IMR-90 (cell line): ENCODE measurements at regions of chr1 and their contacts with region 1.

Region 1: GRCh38 chr1:229227298-229227919 is 43.5 kb upstream of the RAB4A start:
- DNase-seq: peak; percentile 61
- ATAC-seq: peak; percentile 65
- H3K4me3 ChIP-seq: no peak overlapping the region
- H3K27ac ChIP-seq: no peak overlapping the region
- H3K4me1 ChIP-seq: peaks cover 5% of the 10 kb centered on the region; the same call in 1 of the 2 replicates
- H3K27me3 ChIP-seq: peaks cover 22% of the 10 kb centered on the region
- CTCF ChIP-seq: peak; percentile 87
- POLR2A ChIP-seq: no peak
- RAD21 ChIP-seq: peak; percentile 89

Region 2: DNA sequence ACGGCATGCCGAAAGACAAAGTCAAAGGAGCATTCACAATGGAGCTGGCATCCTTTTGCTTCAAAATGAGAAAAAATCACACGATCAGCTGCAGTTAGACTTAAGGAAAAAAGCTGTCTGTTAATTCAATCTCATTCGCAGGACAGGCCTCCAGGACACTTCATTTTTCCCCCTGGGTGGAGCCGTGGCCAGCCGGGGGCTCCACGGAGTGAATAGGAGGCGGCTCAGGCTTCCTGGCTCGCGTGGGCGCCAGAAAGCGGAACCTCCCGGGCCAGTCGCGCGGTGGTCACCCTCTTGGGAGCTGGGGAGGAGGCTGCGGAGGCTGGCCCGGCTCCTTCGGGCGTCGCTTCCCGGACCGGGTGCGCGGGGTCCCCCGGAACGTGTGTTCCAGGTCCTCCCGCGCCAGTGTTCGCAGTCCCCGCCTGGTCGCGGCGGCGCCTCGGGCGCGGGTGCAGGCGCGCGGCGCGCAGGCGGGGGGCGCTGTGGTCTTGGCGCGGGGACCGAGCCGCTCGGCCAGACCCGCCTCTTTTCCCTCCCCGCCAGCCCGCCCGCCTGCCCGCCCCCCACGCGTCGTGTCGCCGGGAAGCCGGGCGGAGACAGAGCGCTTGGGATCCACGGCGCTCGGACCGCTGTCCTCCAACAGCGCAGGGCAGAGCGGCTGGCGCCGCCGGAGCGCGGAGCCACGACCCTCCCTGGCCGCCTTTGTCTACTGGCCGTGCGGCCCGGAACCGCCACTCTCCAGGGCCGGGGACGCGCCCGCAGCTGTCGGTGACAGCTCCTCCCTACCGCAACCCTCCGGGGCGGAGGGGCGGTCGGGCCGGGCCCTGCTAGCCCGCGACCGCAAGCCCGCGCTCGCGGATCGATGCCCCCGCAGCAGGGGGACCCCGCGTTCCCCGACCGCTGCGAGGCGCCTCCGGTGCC is 492.3 kb before region 1 on chr1 and contains the start of gene RHOU:
- CTCF ChIA-PET with region 1: interaction called, 8 read pairs
- POLR2A ChIA-PET with region 1: no interaction called
- dilution Hi-C with region 1: no loop called
- in situ Hi-C with region 1: loop called (anchors 10 kb)
- intact Hi-C with region 1: loop called (anchors 1 kb)
- DNase-seq: peak; percentile 37
- ATAC-seq: peak; percentile 92
- H3K4me3 ChIP-seq: peak within 1 kb of the TSS; percentile 62
- H3K27ac ChIP-seq: peak within 1 kb of the TSS; percentile 58
- H3K4me1 ChIP-seq: no peaks in the 10 kb centered on the region; the same call in 1 of the 2 replicates
- H3K27me3 ChIP-seq: peaks cover 21% of the 10 kb centered on the region
- CTCF ChIP-seq: peak; percentile 71
- POLR2A ChIP-seq: no peak
- RAD21 ChIP-seq: peak; percentile 71
- total RNA-seq, gene RHOU: 0.72 and 0.83 TPM in 2 replicates

Region 3: GRCh38 chr1:228902781-228903433 is 324.5 kb before region 1 on chr1:
- CTCF ChIA-PET with region 1: no interaction called
- POLR2A ChIA-PET with region 1: no interaction called
- dilution Hi-C with region 1: no loop called
- in situ Hi-C with region 1: no loop called
- intact Hi-C with region 1: loop called (anchors 10 kb)
- DNase-seq: peak; percentile 99
- ATAC-seq: peak; percentile 86
- H3K4me3 ChIP-seq: no peak overlapping the region
- H3K27ac ChIP-seq: peak overlapping the region; percentile 27; the same call in 1 of the 2 replicates
- H3K4me1 ChIP-seq: peaks cover 25% of the 10 kb centered on the region
- H3K27me3 ChIP-seq: no peaks in the 10 kb centered on the region
- CTCF ChIP-seq: no peak
- POLR2A ChIP-seq: no peak
- RAD21 ChIP-seq: peak; percentile 8; the same call in 1 of the 2 replicates

Region 4: DNA sequence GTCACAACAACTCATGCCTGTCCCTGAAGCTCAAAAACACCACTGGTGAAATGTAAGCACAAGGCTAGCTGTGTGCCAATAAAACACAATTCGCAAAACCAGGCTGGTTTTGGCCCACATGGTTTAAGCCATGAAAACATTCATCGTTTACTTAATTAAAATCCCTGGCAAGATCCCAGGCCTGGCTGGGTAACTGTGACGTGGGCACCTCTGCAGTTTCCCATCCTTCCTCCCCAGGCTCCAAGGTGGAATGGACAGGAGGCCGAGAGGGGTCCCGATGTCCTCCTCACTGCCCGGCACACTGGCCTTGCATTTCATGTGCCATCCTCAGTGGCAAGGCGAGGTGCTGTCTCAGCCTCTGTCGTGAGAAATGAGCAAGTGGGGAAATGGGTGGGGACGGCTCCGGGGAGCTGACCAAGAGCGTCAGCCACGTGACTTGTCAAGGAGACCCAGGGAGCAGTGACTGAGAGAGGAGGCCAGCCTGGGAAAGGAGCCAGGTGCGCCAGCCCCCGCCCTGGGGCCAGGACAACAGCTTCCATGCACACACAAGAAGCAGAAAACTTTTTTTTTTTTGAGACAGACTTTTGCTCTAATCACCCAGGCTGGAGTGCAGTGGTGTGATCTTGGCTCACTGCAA is 109.6 kb before region 1 on chr1:
- CTCF ChIA-PET with region 1: interaction called, 4 read pairs
- POLR2A ChIA-PET with region 1: no interaction called
- dilution Hi-C with region 1: no loop called
- in situ Hi-C with region 1: no loop called
- intact Hi-C with region 1: loop called (anchors 5 kb)
- DNase-seq: peak; percentile 49
- ATAC-seq: peak; percentile 24
- H3K4me3 ChIP-seq: no peak overlapping the region
- H3K27ac ChIP-seq: peak overlapping the region; percentile 1; the same call in 1 of the 2 replicates
- H3K4me1 ChIP-seq: peaks cover 16% of the 10 kb centered on the region; the same call in 1 of the 2 replicates
- H3K27me3 ChIP-seq: peaks cover 17% of the 10 kb centered on the region
- CTCF ChIP-seq: no peak
- POLR2A ChIP-seq: no peak
- RAD21 ChIP-seq: no peak